AG04449 (cell line): ENCODE measurements at regions of chr9 and their contacts with region 1.

Region 1: DNA sequence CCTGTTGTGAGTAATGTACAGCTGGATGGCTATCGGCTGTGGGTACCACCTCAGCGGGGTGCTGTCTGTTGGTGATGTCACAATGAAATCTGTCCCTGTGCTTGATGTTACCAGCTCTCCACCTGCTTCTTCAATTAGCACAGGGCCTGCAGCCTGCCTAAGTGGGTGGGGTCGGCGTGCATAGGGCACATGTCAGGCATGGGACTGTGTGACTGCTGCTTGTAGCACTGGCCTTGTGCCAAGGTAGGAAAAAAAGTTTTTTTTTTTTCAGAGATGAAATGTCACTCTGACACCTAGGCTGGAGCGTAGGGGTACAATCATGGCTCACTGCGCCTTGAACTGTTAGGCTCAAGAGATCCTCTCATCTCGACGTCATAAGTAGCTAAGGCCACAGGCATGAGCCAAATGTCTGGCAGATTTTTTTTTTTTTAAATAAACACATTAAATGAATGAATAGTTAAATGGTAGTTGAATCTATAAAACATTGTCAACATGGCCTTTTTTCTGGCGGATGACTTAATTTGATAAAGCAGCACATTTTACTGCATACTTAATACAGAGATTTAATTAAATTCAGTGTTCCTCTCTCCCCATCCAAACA is 222.5 kb downstream of the NXNL2 start:
- DNase-seq: no peak
- H3K4me3 ChIP-seq: no peak overlapping the region
- CTCF ChIP-seq: no peak

Region 2: GRCh38 chr9:88746029-88746742 is 11.3 kb before region 1 on chr9:
- CTCF ChIA-PET with region 1: interaction called, 10 read pairs
- POLR2A ChIA-PET with region 1: no interaction called
- DNase-seq: peak; percentile 68
- H3K4me3 ChIP-seq: no peak overlapping the region
- CTCF ChIP-seq: no peak